ENCODE measurements at regions of chr2 and their contacts with region 1.

Region 1: GRCh38 chr2:121530212-121530705 is 421 bp upstream of the RNU4ATAC start:
- DNase-seq: peak; percentile 92

Region 2: DNA sequence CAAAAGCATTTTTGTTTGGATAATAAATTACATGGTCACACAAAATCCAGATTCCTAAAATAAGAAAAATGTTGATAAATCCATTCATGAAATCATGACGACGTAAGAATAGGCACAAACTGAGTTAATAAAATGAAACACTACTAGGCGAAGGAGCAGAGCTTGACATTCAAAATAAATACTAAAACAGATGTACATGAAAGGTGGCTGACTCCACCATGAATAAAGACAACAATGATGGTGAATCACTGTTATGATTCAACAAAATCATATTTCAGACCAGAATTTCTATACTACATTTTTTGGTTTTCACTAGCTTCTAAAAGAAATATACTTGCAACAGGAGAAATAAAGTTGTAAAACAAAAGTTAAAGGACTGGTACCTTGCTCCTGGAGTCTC is 121.6 kb before region 1 on chr2:
- intact Hi-C with region 1: loop called (anchors 5 kb)
- DNase-seq: no peak

Region 3: DNA sequence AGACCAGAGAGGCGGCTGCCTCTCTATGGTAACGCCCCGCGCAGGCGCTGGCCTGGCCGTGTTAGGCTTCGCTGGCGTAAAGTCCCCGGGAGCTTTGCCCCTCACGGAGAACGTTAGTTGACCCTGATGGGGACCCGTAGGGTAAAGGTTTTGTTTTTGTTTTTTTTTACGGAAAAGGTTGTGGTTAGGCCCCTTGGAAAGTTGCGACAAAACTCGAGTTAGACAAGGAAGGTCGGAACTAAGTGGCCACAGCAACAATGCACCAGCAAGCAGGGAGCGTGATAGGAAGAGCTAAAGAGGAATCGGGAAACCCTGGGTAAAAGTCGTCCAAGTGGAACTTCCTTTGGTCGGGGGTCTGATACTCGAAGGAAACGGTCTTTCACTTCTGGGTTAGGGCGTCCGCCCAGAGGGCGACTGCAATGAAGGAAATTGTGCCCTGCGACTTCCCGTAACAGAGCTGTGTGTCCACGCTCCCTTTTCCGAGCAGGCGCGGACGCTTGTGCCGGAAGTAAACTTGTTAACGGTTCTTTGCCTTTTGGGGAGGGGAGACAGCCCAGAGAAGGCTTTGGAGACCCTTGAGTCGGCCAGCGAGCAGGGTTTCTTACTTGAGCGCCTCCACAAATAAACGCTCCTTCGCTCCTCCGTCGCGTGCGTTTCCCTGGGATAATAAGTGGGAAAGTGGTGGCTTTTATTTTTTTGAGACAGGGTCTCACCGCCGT is 119.5 kb after region 1 on chr2:
- intact Hi-C with region 1: loop called (anchors 1 kb)
- DNase-seq: peak; percentile 97

Region 4: GRCh38 chr2:121722479-121722878 is 192.2 kb after region 1 on chr2:
- intact Hi-C with region 1: loop called (anchors 2 kb)
- DNase-seq: no peak

Region 5: GRCh38 chr2:121736462-121737341 is 206.4 kb after region 1 on chr2 and contains the start of gene NIFK:
- intact Hi-C with region 1: loop called (anchors 1 kb)
- DNase-seq: peak; percentile 100
- total RNA-seq, gene NIFK: 28.8 TPM

Measured in cardiac septum (tissue), 1 donor.